ENCODE measurements at regions of chrX and their contacts with region 1.

Region 1: DNA sequence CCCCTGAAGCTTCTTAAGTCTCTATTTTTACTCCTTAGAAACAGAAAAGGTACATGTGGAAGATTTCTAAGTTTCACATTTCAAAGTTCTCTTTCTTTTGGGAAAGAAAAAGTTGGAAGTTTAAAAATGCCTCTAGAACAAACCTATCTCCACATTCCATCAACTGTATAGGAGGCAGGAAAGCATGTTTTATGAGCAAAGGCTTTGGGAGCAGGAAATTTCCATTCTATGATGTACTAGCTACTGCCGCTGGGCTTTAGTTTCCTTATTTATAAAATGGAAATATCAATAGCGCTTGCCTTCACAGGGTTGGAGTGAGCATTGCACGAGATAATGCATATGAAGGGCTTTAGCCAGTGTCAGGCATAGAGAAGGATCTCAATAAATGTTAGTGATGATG is 53.7 kb downstream of the MAOA start:
- DNase-seq: no peak
- ATAC-seq: no peak

Region 2: GRCh38 chrX:43654431-43655150 is 55.2 kb before region 1 on chrX:
- intact Hi-C with region 1: loop called (anchors 5 kb)
- DNase-seq: peak; percentile 95
- ATAC-seq: peak; percentile 97